Calu3 (cell line): ENCODE measurements at regions of chr5 and their contacts with region 1.

Region 1: GRCh38 chr5:112239996-112240395 is 179.1 kb downstream of the EPB41L4A start:
- DNase-seq: peak; percentile 58
- H3K4me3 Mint-ChIP-seq: no peak overlapping the region
- H3K27ac Mint-ChIP-seq: peak overlapping the region; percentile 8
- H3K4me1 Mint-ChIP-seq: peaks cover 49% of the 10 kb centered on the region
- H3K27me3 Mint-ChIP-seq: no peaks in the 10 kb centered on the region
- CTCF ChIP-seq: no peak

Region 2: DNA sequence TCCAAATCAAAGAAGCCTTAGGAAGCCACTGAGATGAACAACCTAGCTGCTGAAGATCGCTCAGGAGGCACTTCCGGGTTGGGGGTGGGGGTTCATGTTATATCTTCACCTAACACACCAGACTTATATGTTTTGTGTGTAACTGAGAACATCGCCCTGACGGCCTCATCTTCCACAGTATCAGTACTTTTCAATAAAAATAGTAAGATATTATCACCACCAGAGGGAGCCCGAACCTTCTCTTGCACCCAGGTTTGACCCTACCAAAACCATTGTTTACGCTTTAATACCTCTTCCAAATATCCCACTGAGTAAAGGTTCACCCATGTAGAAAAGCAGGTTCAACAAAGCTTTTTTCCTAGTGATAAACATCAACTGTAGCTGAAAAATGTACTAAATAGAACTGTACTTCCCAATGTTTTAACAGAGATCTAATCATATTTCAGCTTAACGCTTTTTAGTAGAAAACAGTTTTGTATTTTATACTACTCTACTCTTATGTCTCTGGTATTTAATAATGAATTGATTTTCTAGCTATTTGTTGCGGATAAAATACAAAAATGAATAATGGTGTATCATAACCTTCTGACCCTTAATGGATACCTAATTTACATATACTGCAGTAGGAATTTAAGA is 64.9 kb before region 1 on chr5:
- CTCF ChIA-PET with region 1: no interaction called
- intact Hi-C with region 1: loop called (anchors 5 kb)
- DNase-seq: peak; percentile 57
- H3K4me3 Mint-ChIP-seq: no peak overlapping the region
- H3K27ac Mint-ChIP-seq: no peak overlapping the region
- H3K4me1 Mint-ChIP-seq: no peaks in the 10 kb centered on the region
- H3K27me3 Mint-ChIP-seq: no peaks in the 10 kb centered on the region
- CTCF ChIP-seq: peak; percentile 67

Region 3: GRCh38 chr5:112346411-112347044 is 106.5 kb after region 1 on chr5:
- CTCF ChIA-PET with region 1: no interaction called
- intact Hi-C with region 1: no loop called
- DNase-seq: no peak
- H3K4me3 Mint-ChIP-seq: no peak overlapping the region
- H3K27ac Mint-ChIP-seq: no peak overlapping the region
- H3K4me1 Mint-ChIP-seq: no peaks in the 10 kb centered on the region
- H3K27me3 Mint-ChIP-seq: no peaks in the 10 kb centered on the region
- CTCF ChIP-seq: no peak